ENCODE measurements at regions of chr22 and their contacts with region 1.

Region 1: DNA sequence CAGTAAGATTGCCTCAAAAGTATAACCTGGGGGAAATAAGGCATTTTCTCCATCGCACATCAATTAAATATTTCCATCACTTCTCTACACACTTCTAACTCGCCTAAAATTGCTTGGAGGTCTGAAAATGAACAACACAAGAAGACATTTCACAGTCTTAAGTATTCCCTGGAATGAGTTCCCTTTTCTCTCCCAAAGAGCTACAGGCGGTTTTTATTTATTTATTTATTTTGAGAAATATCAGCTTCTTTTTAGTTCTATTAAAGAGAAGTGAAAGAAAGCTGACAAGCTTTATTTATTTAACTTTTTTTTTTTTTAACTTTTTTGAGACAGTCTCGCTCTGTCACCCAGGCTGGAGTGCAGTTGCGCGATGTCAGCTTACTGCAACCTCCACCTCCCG is 11.5 kb upstream of the PARVB start:
- DNase-seq: no peak
- ATAC-seq: no peak
- H3K4me3 ChIP-seq: no peak overlapping the region
- H3K27ac ChIP-seq: no peak overlapping the region
- H3K4me1 ChIP-seq: no peaks in the 10 kb centered on the region
- H3K27me3 ChIP-seq: no peaks in the 10 kb centered on the region
- CTCF ChIP-seq: no peak

Region 2: GRCh38 chr22:44159221-44159620 is 146.6 kb after region 1 on chr22:
- CTCF ChIA-PET with region 1: no interaction called
- POLR2A ChIA-PET with region 1: no interaction called
- in situ Hi-C with region 1: no loop called
- intact Hi-C with region 1: no loop called
- DNase-seq: no peak
- ATAC-seq: no peak
- H3K4me3 ChIP-seq: no peak overlapping the region
- H3K27ac ChIP-seq: no peak overlapping the region
- H3K4me1 ChIP-seq: no peaks in the 10 kb centered on the region
- H3K27me3 ChIP-seq: no peaks in the 10 kb centered on the region
- CTCF ChIP-seq: no peak

Region 3: DNA sequence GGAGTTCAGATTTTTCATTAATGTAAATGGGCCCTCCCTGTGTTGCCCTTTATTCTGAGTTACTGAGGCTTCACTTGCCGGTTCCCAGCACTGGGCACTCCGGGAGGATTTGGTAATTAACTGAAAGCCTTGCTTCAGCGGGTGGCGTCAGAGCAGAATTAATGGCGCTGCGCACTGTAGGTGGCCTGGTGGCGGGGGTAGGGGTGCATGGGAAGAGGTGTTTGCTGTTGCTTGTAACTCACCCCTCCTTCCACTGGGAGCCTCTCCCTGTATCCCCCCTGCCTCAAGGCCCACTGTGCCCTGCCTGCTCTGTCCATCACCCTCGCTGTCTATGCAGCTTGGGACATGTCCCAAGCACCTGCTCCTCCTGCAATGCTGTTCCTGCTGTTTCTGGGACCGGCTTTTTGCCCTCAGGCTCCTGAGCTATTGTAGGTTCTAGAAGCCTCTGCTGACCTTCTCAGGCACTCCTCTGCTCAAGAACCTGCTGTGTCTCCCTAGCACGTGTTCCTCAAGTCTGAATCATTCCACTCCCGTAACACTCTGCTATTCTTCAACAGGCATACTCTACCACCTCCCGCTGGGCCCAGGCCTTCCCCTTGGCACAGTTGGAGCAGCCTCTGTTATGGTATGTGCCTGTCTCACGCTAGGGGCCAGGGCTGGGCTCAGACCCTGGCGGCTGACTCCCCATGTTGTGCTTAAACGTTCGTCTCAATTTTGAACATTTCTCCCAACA is 764.2 kb after region 1 on chr22:
- CTCF ChIA-PET with region 1: no interaction called
- POLR2A ChIA-PET with region 1: interaction called, 11 read pairs
- in situ Hi-C with region 1: no loop called
- intact Hi-C with region 1: no loop called
- DNase-seq: no peak
- ATAC-seq: no peak
- H3K4me3 ChIP-seq: no peak overlapping the region
- H3K27ac ChIP-seq: no peak overlapping the region
- H3K4me1 ChIP-seq: no peaks in the 10 kb centered on the region
- H3K27me3 ChIP-seq: no peaks in the 10 kb centered on the region
- CTCF ChIP-seq: no peak